Naive thymus-derived CD4-positive, alpha-beta T cell (primary cell): ENCODE measurements at regions of chr14 and their contacts with region 1.

Region 1: GRCh38 chr14:101628471-101628966 is 67.2 kb downstream of the DIO3 start:
- DNase-seq: peak; percentile 57 to 83 (median 77)
- ATAC-seq: peak; percentile 95
- H3K4me3 ChIP-seq: no peak overlapping the region
- H3K4me3 Mint-ChIP-seq: peak overlapping the region in 7 of 10 donors; percentile 8 to 66 (median 44)
- H3K27ac ChIP-seq: no peak overlapping the region
- H3K27ac Mint-ChIP-seq: no peak overlapping the region
- H3K4me1 ChIP-seq: peaks cover 0 to 5% of the 10 kb centered on the region in 2 donors
- H3K4me1 Mint-ChIP-seq: peaks cover 0 to 9% (median 7%) of the 10 kb centered on the region in 7 donors
- H3K27me3 ChIP-seq: no peaks in the 10 kb centered on the region
- H3K27me3 Mint-ChIP-seq: peaks cover 0 to 5% (median 4%) of the 10 kb centered on the region in 5 donors

Region 2: DNA sequence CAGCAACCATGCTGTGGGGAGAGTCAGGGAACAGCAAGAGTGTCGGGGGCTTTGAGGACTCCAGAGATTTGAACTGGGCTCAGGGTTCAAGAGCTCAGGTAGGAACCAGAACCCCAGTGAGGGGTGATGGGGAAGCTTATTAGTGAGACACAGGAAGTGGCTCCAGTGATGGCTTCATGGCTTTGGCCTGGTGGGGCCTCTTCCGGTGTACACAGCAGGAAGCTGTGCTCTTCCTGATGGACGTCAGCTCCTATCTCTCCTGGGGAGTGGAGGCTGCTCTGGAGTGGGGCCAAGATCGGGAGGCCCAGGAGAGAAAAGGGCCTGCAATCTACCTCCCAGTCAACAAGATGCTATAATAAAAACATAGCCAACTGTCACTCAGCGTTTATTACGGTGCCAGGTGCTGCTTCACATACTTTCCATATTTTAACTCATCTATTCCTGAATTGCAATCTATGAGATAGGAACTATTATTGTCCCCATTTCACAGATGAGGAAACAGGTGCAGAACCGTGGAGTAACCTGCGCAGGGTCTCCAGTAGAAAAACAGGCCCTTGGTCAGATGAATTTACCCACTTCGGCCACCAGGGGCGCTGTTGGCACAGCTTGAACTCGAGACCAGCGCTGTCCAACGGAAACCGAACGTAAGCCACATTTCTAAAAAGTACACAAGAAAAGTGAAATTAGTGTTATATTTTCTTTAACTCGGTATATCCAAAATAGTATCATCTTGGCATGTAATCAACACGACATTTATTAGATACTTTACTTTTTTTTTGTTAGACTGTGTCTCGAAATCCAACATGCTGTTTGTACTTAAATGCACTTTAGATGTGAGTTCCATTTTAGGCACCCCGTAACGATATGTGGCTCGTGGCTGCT is 965.4 kb before region 1 on chr14:
- CTCF ChIA-PET with region 1: no interaction called
- POLR2A ChIA-PET with region 1: no interaction called
- intact Hi-C with region 1: loop called in 1 of 2 experiments (anchors 5 kb)
- DNase-seq: peak in 8 of 9 donors; percentile 30 to 66 (median 52)
- ATAC-seq: peak; percentile 73
- H3K4me3 ChIP-seq: no peak overlapping the region
- H3K4me3 Mint-ChIP-seq: no peak overlapping the region
- H3K27ac ChIP-seq: no peak overlapping the region
- H3K27ac Mint-ChIP-seq: peak overlapping the region in 1 of 9 donors; percentile 36
- H3K4me1 ChIP-seq: no peaks in the 10 kb centered on the region
- H3K4me1 Mint-ChIP-seq: peaks cover 0 to 9% (median 1%) of the 10 kb centered on the region in 7 donors
- H3K27me3 ChIP-seq: no peaks in the 10 kb centered on the region
- H3K27me3 Mint-ChIP-seq: peaks cover 0 to 15% (median 9%) of the 10 kb centered on the region in 5 donors

Region 3: GRCh38 chr14:100850841-100851585 is 777.5 kb before region 1 on chr14:
- CTCF ChIA-PET with region 1: interaction called, 9 read pairs
- POLR2A ChIA-PET with region 1: no interaction called
- intact Hi-C with region 1: loop called in 1 of 2 experiments (anchors 1 kb)
- DNase-seq: peak; percentile 44 to 83 (median 69)
- ATAC-seq: peak; percentile 86
- H3K4me3 ChIP-seq: no peak overlapping the region
- H3K4me3 Mint-ChIP-seq: peak overlapping the region in 1 of 10 donors; percentile 8
- H3K27ac ChIP-seq: no peak overlapping the region
- H3K27ac Mint-ChIP-seq: peak overlapping the region in 1 of 9 donors; percentile 4
- H3K4me1 ChIP-seq: peaks cover 0 to 8% of the 10 kb centered on the region in 2 donors
- H3K4me1 Mint-ChIP-seq: peaks cover 0 to 7% (median 0%) of the 10 kb centered on the region in 7 donors
- H3K27me3 ChIP-seq: no peaks in the 10 kb centered on the region
- H3K27me3 Mint-ChIP-seq: no peaks in the 10 kb centered on the region

Region 4: GRCh38 chr14:100904307-100905087 is 724.0 kb before region 1 on chr14:
- CTCF ChIA-PET with region 1: no interaction called
- POLR2A ChIA-PET with region 1: no interaction called
- intact Hi-C with region 1: loop called in 1 of 2 experiments (anchors 5 kb)
- DNase-seq: no peak
- ATAC-seq: no peak
- H3K4me3 ChIP-seq: no peak overlapping the region
- H3K4me3 Mint-ChIP-seq: no peak overlapping the region
- H3K27ac ChIP-seq: no peak overlapping the region
- H3K27ac Mint-ChIP-seq: no peak overlapping the region
- H3K4me1 ChIP-seq: no peaks in the 10 kb centered on the region
- H3K4me1 Mint-ChIP-seq: peaks cover 0 to 8% (median 0%) of the 10 kb centered on the region in 7 donors
- H3K27me3 ChIP-seq: no peaks in the 10 kb centered on the region
- H3K27me3 Mint-ChIP-seq: peaks cover 45 to 65% (median 53%) of the 10 kb centered on the region in 5 donors